HEK293 (cell line): ENCODE measurements at regions of chr2 and their contacts with region 1.

Region 1: GRCh38 chr2:152025678-152026287 is 73.1 kb downstream of the CACNB4 start:
- H3K4me3 ChIP-seq: peak overlapping the region; percentile 39
- H3K27ac ChIP-seq: no peak overlapping the region
- H3K4me1 ChIP-seq: peaks cover 5% of the 10 kb centered on the region
- CTCF ChIP-seq: peak; percentile 90

Region 2: GRCh38 chr2:151623631-151624030 is 402.2 kb before region 1 on chr2:
- CTCF ChIA-PET with region 1: no interaction called
- POLR2A ChIA-PET with region 1: no interaction called
- H3K4me3 ChIP-seq: no peak overlapping the region
- H3K27ac ChIP-seq: no peak overlapping the region
- H3K4me1 ChIP-seq: no peaks in the 10 kb centered on the region
- CTCF ChIP-seq: no peak

Region 3: GRCh38 chr2:151905963-151906632 is 119.7 kb before region 1 on chr2:
- CTCF ChIA-PET with region 1: no interaction called
- POLR2A ChIA-PET with region 1: no interaction called
- H3K4me3 ChIP-seq: no peak overlapping the region
- H3K27ac ChIP-seq: no peak overlapping the region
- H3K4me1 ChIP-seq: peaks cover 3% of the 10 kb centered on the region; the same call in 1 of the 2 replicates
- CTCF ChIP-seq: no peak

Region 4: DNA sequence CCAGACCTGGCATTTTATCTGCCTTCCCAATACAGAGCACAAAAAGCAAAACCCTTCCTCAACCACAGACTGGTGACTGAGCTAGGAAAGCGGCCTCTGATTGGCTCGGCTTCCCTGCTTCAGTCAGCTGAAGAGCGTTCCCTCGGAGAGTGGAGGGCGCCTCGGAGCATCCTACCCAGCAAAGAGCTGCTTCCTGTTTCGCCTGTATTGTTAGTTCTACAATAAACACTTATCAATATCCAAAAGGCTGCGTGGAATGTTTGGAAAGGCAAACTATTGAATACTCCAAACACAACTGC is 51.9 kb before region 1 on chr2:
- CTCF ChIA-PET with region 1: interaction called, 11 read pairs
- POLR2A ChIA-PET with region 1: no interaction called
- H3K4me3 ChIP-seq: no peak overlapping the region
- H3K27ac ChIP-seq: no peak overlapping the region
- H3K4me1 ChIP-seq: peaks cover 3% of the 10 kb centered on the region; the same call in 1 of the 2 replicates
- CTCF ChIP-seq: no peak

Region 5: DNA sequence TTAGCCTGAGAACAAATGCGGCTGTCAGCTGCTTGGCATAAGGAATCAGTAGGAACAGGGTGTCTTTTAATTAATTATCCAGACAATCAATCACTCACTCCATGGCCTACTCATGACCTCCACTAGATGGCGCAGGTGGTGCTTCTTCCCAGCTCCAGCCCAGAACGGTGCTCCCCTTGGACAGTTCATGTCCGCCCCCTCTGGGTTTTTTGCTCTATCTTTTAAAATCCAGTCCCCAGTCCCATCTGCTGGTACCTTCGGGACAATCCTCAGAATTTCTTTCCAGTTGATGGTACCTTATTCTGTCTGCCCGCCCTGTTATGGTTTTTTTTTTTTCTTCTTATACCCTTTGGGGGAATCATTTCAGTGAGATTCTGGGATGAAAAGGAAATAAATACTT is 26.7 kb before region 1 on chr2:
- CTCF ChIA-PET with region 1: interaction called, 20 read pairs
- POLR2A ChIA-PET with region 1: no interaction called
- H3K4me3 ChIP-seq: no peak overlapping the region
- H3K27ac ChIP-seq: no peak overlapping the region
- H3K4me1 ChIP-seq: no peaks in the 10 kb centered on the region
- CTCF ChIP-seq: peak; percentile 48; the same call in 1 of the 2 replicates

Region 6: DNA sequence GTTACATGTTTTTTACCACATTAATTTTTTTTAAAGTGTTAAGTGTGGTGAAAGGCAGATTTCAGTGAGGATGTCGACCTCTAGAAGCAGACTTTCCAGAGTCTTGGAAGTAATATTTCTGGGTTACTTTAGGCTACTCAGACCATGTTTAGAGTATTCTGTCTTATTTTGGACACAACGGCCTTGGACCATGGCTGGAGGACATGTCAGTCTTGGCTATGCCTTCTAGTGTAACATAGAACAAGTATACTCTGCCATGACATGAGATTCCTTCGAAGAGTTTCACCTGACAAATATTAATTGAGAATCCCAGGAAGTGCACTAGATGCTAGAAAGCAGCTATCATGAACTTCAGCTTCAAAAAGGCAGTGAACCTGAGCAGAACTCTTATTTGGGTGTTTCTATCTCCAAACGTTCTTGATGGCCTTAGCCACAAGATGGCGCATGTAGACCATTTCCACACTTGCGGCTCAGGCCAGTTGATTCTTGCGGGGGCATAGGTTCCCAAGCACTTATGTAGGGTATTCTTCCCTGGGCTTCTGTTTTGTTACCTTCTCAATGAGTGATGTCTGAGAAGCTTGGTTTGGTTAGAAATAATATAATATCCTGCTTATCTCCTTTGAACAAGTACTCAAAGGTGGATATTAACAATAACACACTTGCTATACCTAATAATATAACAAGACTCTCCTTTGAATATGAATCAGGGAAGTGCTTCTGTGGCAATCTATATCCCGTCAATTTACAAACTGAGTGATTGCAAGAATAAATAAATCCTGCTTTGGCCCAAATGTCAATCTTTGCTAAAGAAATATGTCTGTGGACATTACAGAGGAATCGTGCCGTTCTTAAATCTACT is 11.1 kb after region 1 on chr2:
- CTCF ChIA-PET with region 1: interaction called, 13 read pairs
- POLR2A ChIA-PET with region 1: no interaction called
- H3K4me3 ChIP-seq: no peak overlapping the region
- H3K27ac ChIP-seq: no peak overlapping the region
- H3K4me1 ChIP-seq: no peaks in the 10 kb centered on the region
- CTCF ChIP-seq: peak; percentile 70

Region 7: DNA sequence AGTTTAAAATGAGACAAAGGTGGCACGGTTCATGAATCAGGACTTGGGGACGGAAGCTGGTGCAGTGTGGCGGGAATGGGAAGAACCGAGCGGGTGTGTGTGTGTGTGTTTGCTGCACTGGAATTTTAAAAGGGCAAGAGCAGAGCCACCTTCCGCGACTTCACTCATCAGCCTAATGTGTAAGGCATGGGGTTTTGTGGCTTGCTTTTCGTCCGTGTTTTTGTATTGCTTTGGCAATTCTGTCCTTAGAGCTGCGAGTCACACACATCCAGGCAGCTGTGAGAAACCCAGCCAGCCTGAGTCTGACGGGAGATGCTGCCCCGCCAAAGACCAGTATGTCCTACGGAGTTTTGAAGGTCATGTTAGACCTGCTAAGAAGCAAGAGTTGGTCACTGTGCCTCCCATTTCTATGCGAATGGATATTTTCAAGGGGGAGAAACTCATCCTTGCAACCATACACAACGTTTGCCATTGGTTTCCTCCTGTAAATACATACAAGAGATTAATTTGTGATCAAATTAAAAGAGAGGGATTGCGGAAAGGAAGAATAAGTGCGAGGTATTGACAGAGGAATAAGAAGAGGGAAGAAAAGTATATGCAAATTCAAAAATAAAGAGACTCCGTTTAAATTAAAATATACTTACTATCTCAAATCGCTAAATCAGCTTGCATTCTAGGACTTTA is 73.7 kb after region 1 on chr2:
- CTCF ChIA-PET with region 1: interaction called, 11 read pairs
- POLR2A ChIA-PET with region 1: no interaction called
- H3K4me3 ChIP-seq: peak overlapping the region; percentile 73
- H3K27ac ChIP-seq: peak overlapping the region; percentile 47; the same call in 1 of the 2 replicates
- H3K4me1 ChIP-seq: peaks cover 7% of the 10 kb centered on the region
- CTCF ChIP-seq: no peak

Region 8: GRCh38 chr2:152367547-152368390 is 342.0 kb after region 1 on chr2:
- CTCF ChIA-PET with region 1: no interaction called
- POLR2A ChIA-PET with region 1: no interaction called
- H3K4me3 ChIP-seq: no peak overlapping the region
- H3K27ac ChIP-seq: no peak overlapping the region
- H3K4me1 ChIP-seq: peaks cover 21% of the 10 kb centered on the region
- CTCF ChIP-seq: no peak

Region 9: GRCh38 chr2:152383702-152384101 is 357.9 kb after region 1 on chr2:
- CTCF ChIA-PET with region 1: no interaction called
- POLR2A ChIA-PET with region 1: no interaction called
- H3K4me3 ChIP-seq: no peak overlapping the region
- H3K27ac ChIP-seq: no peak overlapping the region
- H3K4me1 ChIP-seq: peaks cover 9% of the 10 kb centered on the region; the same call in 1 of the 2 replicates
- CTCF ChIP-seq: no peak